ENCODE measurements at regions of chr17 and their contacts with region 1.

Region 1: DNA sequence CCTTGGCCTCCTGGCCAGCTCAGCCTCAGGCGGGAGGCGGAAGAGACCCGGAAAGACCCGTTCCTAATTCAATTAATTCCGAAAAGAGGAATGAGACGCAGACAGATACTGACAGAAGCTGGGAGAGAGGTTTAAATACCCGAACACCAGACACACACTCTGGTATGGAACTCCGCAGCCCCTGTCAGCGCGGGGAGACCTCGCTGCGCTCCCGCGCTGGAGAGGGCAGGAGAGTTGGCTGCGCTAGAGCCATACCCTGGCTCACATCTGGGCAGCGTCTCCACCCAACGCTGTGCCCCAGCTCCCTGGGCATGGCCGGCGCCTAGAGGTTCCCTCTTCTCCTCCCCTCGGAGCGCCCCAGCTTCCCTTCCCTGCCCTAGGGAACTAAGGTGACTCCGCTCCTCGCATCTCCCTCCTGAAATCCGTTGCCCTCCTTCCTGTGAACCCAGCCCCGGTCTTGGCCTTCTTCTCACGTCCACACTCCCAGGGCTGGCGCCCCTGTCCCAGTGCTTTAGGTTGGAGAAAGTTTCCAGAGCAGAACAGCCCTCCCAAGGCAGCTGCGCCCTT is 8.0 kb downstream of the NEUROD2 start:
- DNase-seq: no peak
- ATAC-seq: no peak
- H3K4me3 ChIP-seq: no peak overlapping the region
- H3K27ac ChIP-seq: no peak overlapping the region
- H3K4me1 ChIP-seq: peaks cover 0 to 31% of the 10 kb centered on the region in 2 experiments; a peak in 2 of 5 replicates
- H3K27me3 ChIP-seq: peaks cover 55 to 84% of the 10 kb centered on the region in 2 experiments
- CTCF ChIP-seq: no peak
- EP300 ChIP-seq: no peak
- POLR2A ChIP-seq: no peak
- RAD21 ChIP-seq: no peak

Region 2: DNA sequence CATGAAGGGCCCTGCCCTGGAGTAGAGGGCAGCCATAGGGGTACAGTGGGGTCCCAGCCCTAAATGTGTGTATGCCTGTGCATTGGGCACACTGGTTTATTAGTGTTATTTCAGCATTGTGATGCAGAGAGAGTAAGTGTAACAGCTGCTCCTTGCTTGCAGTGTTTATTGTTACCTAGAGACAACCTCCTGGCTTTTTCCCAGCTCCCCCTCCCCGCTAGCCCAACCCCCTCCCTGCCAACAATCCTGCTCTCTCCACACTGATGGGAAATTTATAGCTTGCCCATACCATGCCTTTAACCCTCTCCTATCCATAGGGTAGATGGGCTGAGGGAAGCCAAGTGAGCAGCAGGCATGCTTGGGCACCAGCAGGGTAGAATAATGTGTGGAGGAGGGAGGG is 43.3 kb before region 1 on chr17:
- CTCF ChIA-PET with region 1: no interaction called
- POLR2A ChIA-PET with region 1: no interaction called
- in situ Hi-C with region 1: loop called (anchors 5 kb)
- intact Hi-C with region 1: no loop called
- DNase-seq: no peak
- ATAC-seq: no peak
- H3K4me3 ChIP-seq: no peak overlapping the region
- H3K27ac ChIP-seq: no peak overlapping the region
- H3K4me1 ChIP-seq: no peaks in the 10 kb centered on the region
- H3K27me3 ChIP-seq: no peaks in the 10 kb centered on the region
- CTCF ChIP-seq: no peak
- EP300 ChIP-seq: no peak
- POLR2A ChIP-seq: no peak
- RAD21 ChIP-seq: no peak

Measured in K562 (cell line).